GM10248 (cell line): ENCODE measurements at regions of chr10 and their contacts with region 1.

Region 1: DNA sequence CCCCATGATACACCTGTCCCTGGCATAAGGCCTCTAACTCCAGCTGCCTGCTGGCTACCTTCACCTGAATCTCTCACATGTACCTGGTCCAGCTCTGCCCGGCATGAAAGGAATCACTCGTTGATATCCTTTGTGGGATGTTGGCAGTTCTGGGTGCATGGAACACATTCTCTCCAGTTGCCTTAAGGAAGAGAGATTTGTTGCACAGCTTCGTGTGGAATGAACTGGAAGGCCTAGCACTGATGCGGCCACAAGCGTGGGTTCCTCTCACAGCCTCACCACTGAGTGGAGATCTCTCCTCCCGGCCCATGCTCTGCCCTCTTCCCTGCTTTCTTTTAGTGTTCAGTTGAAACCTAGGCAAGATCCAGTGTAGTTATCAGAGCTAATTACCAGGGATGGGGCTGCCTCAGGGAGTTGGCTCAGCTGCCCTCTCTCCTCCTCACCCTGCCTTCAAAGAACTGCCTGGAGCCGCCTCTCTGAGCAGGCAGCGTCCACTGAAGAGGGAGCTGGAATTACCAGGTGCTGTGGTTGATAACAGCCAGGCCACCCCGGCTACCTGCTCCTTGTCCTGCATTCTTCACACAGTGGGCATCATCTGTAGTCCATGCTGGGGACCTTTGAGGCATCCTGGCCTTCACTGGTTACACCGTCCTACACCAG is 194.3 kb downstream of the CCDC3 start:
- DNase-seq: no peak
- CTCF ChIP-seq: no peak

Region 2: GRCh38 chr10:12833451-12833850 is 26.2 kb after region 1 on chr10:
- CTCF ChIA-PET with region 1: no interaction called
- POLR2A ChIA-PET with region 1: interaction called, 10 read pairs
- DNase-seq: no peak
- CTCF ChIP-seq: no peak